CD4-positive, alpha-beta memory T cell (primary cell): ENCODE measurements at regions of chr19 and their contacts with region 1.

Region 1: DNA sequence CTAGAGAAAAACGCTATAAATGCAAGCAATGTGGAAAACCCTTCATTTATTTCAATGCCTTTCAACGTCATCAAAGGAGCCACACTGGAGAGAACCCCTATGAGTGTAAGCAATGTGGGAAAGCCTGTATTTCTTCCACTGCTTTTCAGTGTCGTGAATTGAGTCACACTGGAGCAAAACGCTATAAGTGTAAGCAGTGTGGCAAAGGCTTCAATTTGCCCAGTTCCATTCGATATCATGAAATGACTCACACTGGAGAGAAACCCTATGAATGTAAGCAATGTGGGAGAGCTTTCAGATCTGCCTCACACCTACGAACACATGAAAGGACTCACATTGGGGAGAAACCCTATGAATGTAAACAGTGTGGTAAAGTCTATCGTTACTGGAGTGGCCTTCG is 27.4 kb downstream of the ZNF20 start:
- DNase-seq: no peak
- H3K4me3 ChIP-seq: no peak overlapping the region
- H3K4me3 Mint-ChIP-seq: no peak overlapping the region
- H3K27ac ChIP-seq: no peak overlapping the region
- H3K27ac Mint-ChIP-seq: no peak overlapping the region
- H3K4me1 ChIP-seq: no peaks in the 10 kb centered on the region
- H3K4me1 Mint-ChIP-seq: no peaks in the 10 kb centered on the region
- H3K27me3 ChIP-seq: no peaks in the 10 kb centered on the region
- H3K27me3 Mint-ChIP-seq: no peaks in the 10 kb centered on the region

Region 2: GRCh38 chr19:12092065-12092867 is 20.4 kb before region 1 on chr19:
- CTCF ChIA-PET with region 1: interaction called, 13 read pairs
- POLR2A ChIA-PET with region 1: no interaction called
- intact Hi-C with region 1: no loop called
- DNase-seq: peak in 4 of 5 donors; percentile 2 to 23 (median 12)
- H3K4me3 ChIP-seq: peak overlapping the region in 1 of 2 donors; percentile 46
- H3K4me3 Mint-ChIP-seq: peak overlapping the region; percentile 77 to 87 (median 81)
- H3K27ac ChIP-seq: no peak overlapping the region
- H3K27ac Mint-ChIP-seq: peak overlapping the region in 4 of 7 donors; percentile 15 to 70 (median 32)
- H3K4me1 ChIP-seq: peaks cover 6% of the 10 kb centered on the region
- H3K4me1 Mint-ChIP-seq: peaks cover 2 to 16% (median 11%) of the 10 kb centered on the region in 4 donors
- H3K27me3 ChIP-seq: no peaks in the 10 kb centered on the region
- H3K27me3 Mint-ChIP-seq: peaks cover 10 to 19% of the 10 kb centered on the region in 2 donors